ENCODE measurements at regions of chr2 and their contacts with region 1.

Region 1: DNA sequence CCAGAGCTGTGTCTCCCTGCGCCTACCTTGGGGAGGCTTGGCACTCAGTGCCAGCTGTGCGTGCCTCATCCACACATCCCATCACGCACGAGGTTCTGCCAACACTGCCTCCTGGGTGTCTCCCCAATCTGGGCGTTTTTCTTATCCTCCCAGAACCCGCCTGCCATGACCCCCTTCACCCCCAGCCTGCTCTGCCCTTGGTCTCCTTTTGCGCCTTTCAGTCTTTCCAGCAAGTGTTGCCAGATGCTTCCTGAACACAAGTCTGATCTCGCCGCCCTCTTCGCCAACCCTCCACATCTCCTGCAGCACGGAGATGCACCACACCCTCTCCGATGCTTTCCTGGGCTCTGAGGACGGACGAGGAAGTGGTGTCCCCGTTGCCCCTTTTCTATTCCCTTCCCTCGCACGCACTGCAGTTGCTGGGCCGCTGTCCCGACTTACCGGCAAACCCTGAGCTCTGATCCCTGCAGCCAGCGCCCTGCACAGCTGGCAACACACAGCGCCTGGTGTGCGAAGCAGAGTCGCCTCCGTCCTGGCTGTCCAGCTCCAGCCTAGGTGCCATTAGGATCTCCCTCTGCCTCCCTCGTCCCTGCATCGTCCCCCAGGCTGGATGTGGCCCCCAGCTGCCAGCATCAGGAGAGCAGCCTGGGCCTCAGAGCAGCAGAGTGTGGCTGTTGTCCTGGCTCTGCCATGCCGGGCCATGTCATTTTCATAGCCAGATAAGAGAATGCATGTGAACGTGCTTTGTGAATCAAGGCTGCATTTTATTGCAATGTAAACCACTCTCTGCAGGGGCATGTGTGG is 22.6 kb upstream of the ALLC start:
- DNase-seq: no peak
- H3K4me3 ChIP-seq: peak overlapping the region; percentile 29
- H3K27me3 ChIP-seq: no peaks in the 10 kb centered on the region; the same call in 1 of the 2 replicates
- CTCF ChIP-seq: no peak

Region 2: GRCh38 chr2:3651691-3652648 is 16.6 kb after region 1 on chr2:
- CTCF ChIA-PET with region 1: interaction called, 15 read pairs
- POLR2A ChIA-PET with region 1: no interaction called
- DNase-seq: no peak
- H3K4me3 ChIP-seq: no peak overlapping the region
- H3K27me3 ChIP-seq: 0 out of 2 replicates have a peak, but pooled peaks cover 1% of the 10 kb centered on the region
- CTCF ChIP-seq: no peak